CD4-positive, alpha-beta memory T cell (primary cell): ENCODE measurements at regions of chr6 and their contacts with region 1.

Region 1: DNA sequence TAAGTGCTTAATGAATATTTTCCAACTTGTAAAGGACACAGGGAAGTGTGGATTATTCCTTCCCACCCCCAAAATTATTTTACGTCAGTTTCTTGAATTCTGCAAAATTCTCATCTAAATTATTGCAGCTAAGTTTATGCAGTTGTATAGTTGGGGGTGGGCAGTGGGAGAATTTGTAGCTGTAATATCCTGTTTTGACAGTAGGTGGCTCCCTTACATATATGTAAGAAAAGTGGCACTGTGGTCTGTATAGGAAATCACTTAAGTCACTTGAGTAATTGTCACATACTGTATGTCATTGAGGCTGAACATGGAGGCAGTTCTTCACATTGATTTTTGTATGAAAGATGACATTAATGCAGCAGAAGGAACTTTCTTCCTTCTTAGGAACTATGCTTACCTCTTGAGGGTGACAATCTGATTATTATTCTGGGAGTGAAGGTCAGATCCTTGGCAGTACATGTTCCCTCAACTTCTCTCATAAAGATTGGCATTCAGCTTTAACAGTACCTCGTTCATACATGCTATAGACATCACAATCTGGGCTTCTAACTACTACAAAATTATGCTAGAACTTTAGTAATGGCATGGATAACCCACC is 14.7 kb upstream of the CFAP206 start:
- DNase-seq: peak; percentile 51 to 62 (median 59)
- H3K4me3 ChIP-seq: no peak overlapping the region
- H3K4me3 Mint-ChIP-seq: no peak overlapping the region
- H3K27ac ChIP-seq: no peak overlapping the region
- H3K27ac Mint-ChIP-seq: no peak overlapping the region
- H3K4me1 ChIP-seq: no peaks in the 10 kb centered on the region
- H3K4me1 Mint-ChIP-seq: peaks cover 0 to 2% (median 0%) of the 10 kb centered on the region in 4 donors
- H3K27me3 ChIP-seq: no peaks in the 10 kb centered on the region
- H3K27me3 Mint-ChIP-seq: no peaks in the 10 kb centered on the region

Region 2: DNA sequence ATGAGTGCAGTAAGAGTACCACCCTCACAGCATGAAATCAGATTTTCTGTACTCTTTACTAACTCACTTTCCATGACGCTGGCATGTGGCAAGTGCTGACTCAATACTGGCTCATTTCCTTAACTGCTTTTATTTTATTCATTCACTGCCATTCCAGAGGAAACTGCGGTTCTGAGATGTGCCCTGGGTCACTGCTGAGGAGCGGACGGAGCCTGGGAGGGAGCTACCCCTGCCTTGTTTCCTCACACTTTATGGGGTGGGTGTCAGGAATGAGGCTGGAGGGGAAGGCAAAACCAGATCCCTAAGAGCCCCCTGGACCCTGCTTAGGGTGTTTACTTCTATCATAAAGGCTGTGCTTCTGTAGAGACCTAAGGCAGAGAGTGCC is 1928.9 kb before region 1 on chr6:
- CTCF ChIA-PET with region 1: no interaction called
- POLR2A ChIA-PET with region 1: no interaction called
- intact Hi-C with region 1: no loop called
- DNase-seq: no peak
- H3K4me3 ChIP-seq: no peak overlapping the region
- H3K4me3 Mint-ChIP-seq: no peak overlapping the region
- H3K27ac ChIP-seq: no peak overlapping the region
- H3K27ac Mint-ChIP-seq: peak overlapping the region in 1 of 7 donors; percentile 3
- H3K4me1 ChIP-seq: peaks cover 28% of the 10 kb centered on the region
- H3K4me1 Mint-ChIP-seq: peaks cover 6 to 45% (median 32%) of the 10 kb centered on the region in 4 donors
- H3K27me3 ChIP-seq: no peaks in the 10 kb centered on the region
- H3K27me3 Mint-ChIP-seq: peaks cover 6 to 10% of the 10 kb centered on the region in 2 donors

Region 3: GRCh38 chr6:87139236-87139635 is 253.9 kb before region 1 on chr6:
- CTCF ChIA-PET with region 1: interaction called, 4 read pairs
- POLR2A ChIA-PET with region 1: no interaction called
- intact Hi-C with region 1: loop called (anchors 2 kb)
- DNase-seq: peak; percentile 50 to 71 (median 68)
- H3K4me3 ChIP-seq: no peak overlapping the region
- H3K4me3 Mint-ChIP-seq: no peak overlapping the region
- H3K27ac ChIP-seq: no peak overlapping the region
- H3K27ac Mint-ChIP-seq: peak overlapping the region in 1 of 7 donors; percentile 80
- H3K4me1 ChIP-seq: no peaks in the 10 kb centered on the region
- H3K4me1 Mint-ChIP-seq: peaks cover 0 to 4% (median 3%) of the 10 kb centered on the region in 4 donors
- H3K27me3 ChIP-seq: no peaks in the 10 kb centered on the region
- H3K27me3 Mint-ChIP-seq: peaks cover 5 to 6% of the 10 kb centered on the region in 2 donors

Region 4: GRCh38 chr6:87308970-87309369 is 84.2 kb before region 1 on chr6:
- CTCF ChIA-PET with region 1: no interaction called
- POLR2A ChIA-PET with region 1: no interaction called
- intact Hi-C with region 1: no loop called
- DNase-seq: no peak
- H3K4me3 ChIP-seq: no peak overlapping the region
- H3K4me3 Mint-ChIP-seq: no peak overlapping the region
- H3K27ac ChIP-seq: no peak overlapping the region
- H3K27ac Mint-ChIP-seq: no peak overlapping the region
- H3K4me1 ChIP-seq: no peaks in the 10 kb centered on the region
- H3K4me1 Mint-ChIP-seq: no peaks in the 10 kb centered on the region
- H3K27me3 ChIP-seq: no peaks in the 10 kb centered on the region
- H3K27me3 Mint-ChIP-seq: peaks cover 1 to 5% of the 10 kb centered on the region in 2 donors

Region 5: DNA sequence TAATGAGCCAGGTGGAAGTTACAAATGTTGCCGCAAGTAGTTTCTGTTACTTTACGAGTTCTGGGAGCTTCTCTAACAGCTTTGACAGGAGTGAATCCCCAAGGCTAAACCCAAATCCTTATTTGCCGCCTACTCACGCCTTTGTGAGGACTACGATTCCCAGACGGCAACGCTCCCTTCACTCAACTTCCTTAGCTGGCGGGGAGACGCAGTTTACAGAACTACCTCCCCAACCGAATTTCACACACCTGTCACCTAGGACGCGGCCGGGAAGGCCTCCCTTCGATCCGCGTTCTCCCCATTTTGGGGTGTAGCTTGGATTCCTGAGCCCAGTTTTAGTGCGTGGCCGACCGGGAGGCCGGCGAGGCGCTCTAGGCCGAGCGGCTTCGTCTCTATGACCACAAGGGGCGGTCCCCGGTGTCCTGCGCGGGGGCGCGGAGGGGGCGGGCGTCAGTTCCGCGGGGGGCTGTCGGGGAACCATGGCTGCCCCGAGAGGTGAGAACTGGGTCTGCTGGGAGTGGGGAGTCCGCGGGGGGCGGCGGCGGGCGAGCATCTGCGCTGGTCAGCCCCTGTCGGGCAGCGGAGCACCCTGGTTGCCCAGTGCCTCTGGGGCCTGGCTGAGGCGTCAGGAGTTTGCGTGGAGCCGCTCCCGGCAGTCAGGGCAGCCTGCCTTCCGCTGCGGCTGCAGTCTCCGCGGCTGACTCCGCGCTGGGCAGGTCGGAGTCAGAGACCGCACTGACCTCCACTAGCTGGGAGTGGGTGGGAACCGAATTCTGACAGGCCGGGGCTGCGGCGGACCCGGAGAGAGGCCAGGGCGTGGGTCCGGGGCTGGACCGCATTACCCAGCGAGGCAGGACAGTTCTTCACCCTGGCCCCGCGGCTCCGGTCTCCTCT is 79.7 kb after region 1 on chr6 and contains the start of gene SLC35A1:
- CTCF ChIA-PET with region 1: no interaction called
- POLR2A ChIA-PET with region 1: no interaction called
- intact Hi-C with region 1: loop called (anchors 5 kb)
- DNase-seq: peak; percentile 80 to 92 (median 86)
- H3K4me3 ChIP-seq: peak within 1 kb of the TSS; percentile 67 to 72
- H3K4me3 Mint-ChIP-seq: peak within 1 kb of the TSS; percentile 97 to 99 (median 99)
- H3K27ac ChIP-seq: peak within 1 kb of the TSS; percentile 94
- H3K27ac Mint-ChIP-seq: peak within 1 kb of the TSS; percentile 93 to 100 (median 100)
- H3K4me1 ChIP-seq: peaks cover 18% of the 10 kb centered on the region
- H3K4me1 Mint-ChIP-seq: peaks cover 9 to 27% (median 16%) of the 10 kb centered on the region in 4 donors
- H3K27me3 ChIP-seq: no peaks in the 10 kb centered on the region
- H3K27me3 Mint-ChIP-seq: peaks cover 0 to 2% of the 10 kb centered on the region in 2 donors
- total RNA-seq, gene SLC35A1: 20.4 to 26.2 TPM

Region 6: GRCh38 chr6:87514831-87515230 is 121.7 kb after region 1 on chr6:
- CTCF ChIA-PET with region 1: no interaction called
- POLR2A ChIA-PET with region 1: no interaction called
- intact Hi-C with region 1: no loop called
- DNase-seq: no peak
- H3K4me3 ChIP-seq: no peak overlapping the region
- H3K4me3 Mint-ChIP-seq: peak overlapping the region in 2 of 8 donors; percentile 14 to 44
- H3K27ac ChIP-seq: no peak overlapping the region
- H3K27ac Mint-ChIP-seq: peak overlapping the region in 6 of 7 donors; percentile 36 to 79 (median 65)
- H3K4me1 ChIP-seq: peaks cover 7% of the 10 kb centered on the region
- H3K4me1 Mint-ChIP-seq: peaks cover 7 to 13% (median 9%) of the 10 kb centered on the region in 4 donors
- H3K27me3 ChIP-seq: no peaks in the 10 kb centered on the region
- H3K27me3 Mint-ChIP-seq: no peaks in the 10 kb centered on the region

Region 7: GRCh38 chr6:88492824-88493223 is 1099.7 kb after region 1 on chr6:
- CTCF ChIA-PET with region 1: no interaction called
- POLR2A ChIA-PET with region 1: no interaction called
- intact Hi-C with region 1: loop called (anchors 5 kb)
- DNase-seq: no peak
- H3K4me3 ChIP-seq: no peak overlapping the region
- H3K4me3 Mint-ChIP-seq: no peak overlapping the region
- H3K27ac ChIP-seq: no peak overlapping the region
- H3K27ac Mint-ChIP-seq: no peak overlapping the region
- H3K4me1 ChIP-seq: no peaks in the 10 kb centered on the region
- H3K4me1 Mint-ChIP-seq: no peaks in the 10 kb centered on the region
- H3K27me3 ChIP-seq: no peaks in the 10 kb centered on the region
- H3K27me3 Mint-ChIP-seq: peaks cover 6 to 10% of the 10 kb centered on the region in 2 donors

Region 8: GRCh38 chr6:88655586-88655985 is 1262.5 kb after region 1 on chr6:
- CTCF ChIA-PET with region 1: no interaction called
- POLR2A ChIA-PET with region 1: no interaction called
- intact Hi-C with region 1: no loop called
- DNase-seq: no peak
- H3K4me3 ChIP-seq: no peak overlapping the region
- H3K4me3 Mint-ChIP-seq: no peak overlapping the region
- H3K27ac ChIP-seq: no peak overlapping the region
- H3K27ac Mint-ChIP-seq: no peak overlapping the region
- H3K4me1 ChIP-seq: no peaks in the 10 kb centered on the region
- H3K4me1 Mint-ChIP-seq: peaks cover 0 to 6% (median 0%) of the 10 kb centered on the region in 4 donors
- H3K27me3 ChIP-seq: no peaks in the 10 kb centered on the region
- H3K27me3 Mint-ChIP-seq: no peaks in the 10 kb centered on the region

Region 9: DNA sequence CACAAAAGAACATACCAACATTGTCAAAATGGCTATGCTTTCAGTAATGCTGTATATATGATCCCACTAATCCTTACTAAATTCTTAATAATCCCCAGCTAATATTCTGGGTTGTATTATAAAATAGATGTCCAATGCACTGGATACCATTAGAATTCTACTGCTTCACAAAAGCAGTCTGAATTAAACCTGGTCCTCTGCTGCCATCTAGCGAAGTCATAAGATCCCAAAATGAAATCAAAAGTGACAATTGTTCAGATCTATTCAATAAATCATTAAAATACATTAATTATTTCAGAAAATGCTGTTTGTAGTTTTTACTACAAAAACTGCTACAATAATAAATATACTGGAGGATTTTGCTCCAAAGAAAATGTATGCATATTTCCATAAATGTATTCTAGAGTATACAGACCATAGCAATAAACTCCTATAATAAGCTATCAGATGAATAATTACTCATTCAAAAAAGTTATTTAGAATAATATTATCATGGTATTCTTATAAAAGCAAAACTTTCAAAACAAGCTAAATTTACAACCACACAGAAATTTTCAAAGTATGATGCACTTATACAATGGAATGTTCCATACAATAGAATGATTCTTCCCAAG is 1477.7 kb after region 1 on chr6:
- CTCF ChIA-PET with region 1: interaction called, 45 read pairs
- POLR2A ChIA-PET with region 1: no interaction called
- intact Hi-C with region 1: loop called (anchors 1 kb)
- DNase-seq: peak; percentile 45 to 52 (median 46)
- H3K4me3 ChIP-seq: no peak overlapping the region
- H3K4me3 Mint-ChIP-seq: no peak overlapping the region
- H3K27ac ChIP-seq: no peak overlapping the region
- H3K27ac Mint-ChIP-seq: no peak overlapping the region
- H3K4me1 ChIP-seq: peaks cover 3% of the 10 kb centered on the region
- H3K4me1 Mint-ChIP-seq: peaks cover 6 to 16% (median 9%) of the 10 kb centered on the region in 4 donors
- H3K27me3 ChIP-seq: no peaks in the 10 kb centered on the region
- H3K27me3 Mint-ChIP-seq: no peaks in the 10 kb centered on the region